HEK293 (cell line): ENCODE measurements at regions of chr6 and their contacts with region 1.

Region 1: GRCh38 chr6:16770701-16771569 is 9.7 kb upstream of the ATXN1 start:
- H3K4me3 ChIP-seq: no peak overlapping the region
- H3K27ac ChIP-seq: peak overlapping the region; percentile 12; the same call in 1 of the 2 replicates
- H3K4me1 ChIP-seq: peaks cover 46% of the 10 kb centered on the region
- CTCF ChIP-seq: peak; percentile 72

Region 2: DNA sequence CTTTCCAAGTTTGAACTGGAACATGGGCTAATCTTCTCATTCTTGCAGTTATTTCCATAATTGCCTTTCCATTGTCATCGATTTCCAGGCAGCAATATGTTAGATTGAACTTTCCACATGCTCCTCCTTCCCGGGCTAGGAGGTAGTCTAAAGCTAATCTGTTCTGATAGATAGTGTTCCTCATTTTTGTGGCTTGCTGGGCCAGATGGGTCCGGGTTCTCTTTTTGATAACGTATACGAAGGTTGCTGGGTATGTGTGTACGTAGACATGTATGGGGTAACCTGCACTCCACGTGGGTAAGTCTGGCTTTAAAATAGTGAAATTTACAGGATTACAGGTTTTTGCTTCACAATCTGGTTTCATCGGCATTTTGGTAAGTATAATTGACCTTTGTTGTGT is 546.5 kb before region 1 on chr6:
- CTCF ChIA-PET with region 1: no interaction called
- POLR2A ChIA-PET with region 1: no interaction called
- H3K4me3 ChIP-seq: no peak overlapping the region
- H3K27ac ChIP-seq: no peak overlapping the region
- H3K4me1 ChIP-seq: no peaks in the 10 kb centered on the region
- CTCF ChIP-seq: no peak

Region 3: GRCh38 chr6:16712255-16712930 is 58.5 kb before region 1 on chr6:
- CTCF ChIA-PET with region 1: no interaction called
- POLR2A ChIA-PET with region 1: no interaction called
- H3K4me3 ChIP-seq: peak overlapping the region; percentile 29
- H3K27ac ChIP-seq: peak overlapping the region; percentile 91
- H3K4me1 ChIP-seq: peaks cover 35% of the 10 kb centered on the region
- CTCF ChIP-seq: no peak

Region 4: GRCh38 chr6:16781348-16782169 is 10.6 kb after region 1 on chr6:
- CTCF ChIA-PET with region 1: interaction called, 16 read pairs
- POLR2A ChIA-PET with region 1: no interaction called
- H3K4me3 ChIP-seq: no peak overlapping the region
- H3K27ac ChIP-seq: no peak overlapping the region
- H3K4me1 ChIP-seq: 0 out of 2 replicates have a peak, but pooled peaks cover 5% of the 10 kb centered on the region
- CTCF ChIP-seq: no peak

Region 5: GRCh38 chr6:16803294-16804200 is 32.6 kb after region 1 on chr6:
- CTCF ChIA-PET with region 1: interaction called, 16 read pairs
- POLR2A ChIA-PET with region 1: interaction called, 5 read pairs
- H3K4me3 ChIP-seq: no peak overlapping the region
- H3K27ac ChIP-seq: no peak overlapping the region
- H3K4me1 ChIP-seq: peaks cover 21% of the 10 kb centered on the region
- CTCF ChIP-seq: no peak

Region 6: GRCh38 chr6:17086469-17086868 is 315.5 kb after region 1 on chr6:
- CTCF ChIA-PET with region 1: interaction called, 42 read pairs
- POLR2A ChIA-PET with region 1: interaction called, 3 read pairs
- H3K4me3 ChIP-seq: no peak overlapping the region
- H3K27ac ChIP-seq: no peak overlapping the region
- H3K4me1 ChIP-seq: no peaks in the 10 kb centered on the region; the same call in 1 of the 2 replicates
- CTCF ChIP-seq: peak; percentile 55; the same call in 1 of the 2 replicates